ENCODE measurements at regions of chr17 and their contacts with region 1.

Region 1: DNA sequence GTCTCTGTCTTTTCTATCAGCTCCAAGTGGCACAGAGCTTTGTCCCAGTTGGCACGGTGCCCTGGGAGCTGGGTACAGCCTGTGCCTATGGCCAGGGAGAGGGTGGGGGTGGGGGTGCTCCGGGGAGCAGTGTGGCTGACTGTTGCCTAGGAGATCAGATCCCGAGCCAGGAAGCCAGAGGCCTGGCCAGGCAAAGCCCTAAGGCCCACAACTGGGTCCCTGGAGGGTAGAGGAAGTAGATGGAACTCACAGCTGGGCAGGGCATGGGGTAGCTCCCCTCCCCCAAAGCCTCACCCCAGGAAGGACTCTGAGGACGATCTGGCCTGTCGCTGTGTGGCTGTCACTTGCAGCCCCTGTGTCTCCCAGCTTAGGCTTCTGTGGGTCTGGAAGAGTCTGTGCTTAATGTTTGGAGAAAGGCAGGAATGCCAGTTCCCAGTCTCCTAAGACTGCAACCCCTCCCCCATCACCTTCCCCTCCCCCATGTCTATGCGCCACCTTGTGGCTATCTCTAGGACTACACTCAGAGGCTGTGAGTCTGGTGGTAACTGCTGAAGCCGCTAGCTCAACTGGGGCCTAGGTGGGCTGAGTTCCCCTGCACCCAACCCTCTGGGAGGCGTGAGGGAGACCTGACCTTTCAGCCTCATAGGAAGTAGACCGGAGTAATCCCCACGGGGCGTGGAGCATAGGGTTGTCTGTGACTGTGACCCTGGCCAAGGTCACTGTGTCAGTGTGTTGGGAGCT is 12.6 kb downstream of the THRA start:
- DNase-seq: peak; percentile 82
- ATAC-seq: peak; percentile 93
- H3K4me3 ChIP-seq: no peak overlapping the region
- H3K4me3 Mint-ChIP-seq: no peak overlapping the region
- H3K27ac ChIP-seq: no peak overlapping the region
- H3K27ac Mint-ChIP-seq: peak overlapping the region; percentile 46
- H3K4me1 ChIP-seq: peaks cover 28 to 31% of the 10 kb centered on the region in 2 donors
- H3K4me1 Mint-ChIP-seq: peaks cover 40% of the 10 kb centered on the region
- H3K27me3 ChIP-seq: no peaks in the 10 kb centered on the region
- H3K27me3 Mint-ChIP-seq: no peaks in the 10 kb centered on the region
- CTCF ChIP-seq: peak; percentile 88

Region 2: DNA sequence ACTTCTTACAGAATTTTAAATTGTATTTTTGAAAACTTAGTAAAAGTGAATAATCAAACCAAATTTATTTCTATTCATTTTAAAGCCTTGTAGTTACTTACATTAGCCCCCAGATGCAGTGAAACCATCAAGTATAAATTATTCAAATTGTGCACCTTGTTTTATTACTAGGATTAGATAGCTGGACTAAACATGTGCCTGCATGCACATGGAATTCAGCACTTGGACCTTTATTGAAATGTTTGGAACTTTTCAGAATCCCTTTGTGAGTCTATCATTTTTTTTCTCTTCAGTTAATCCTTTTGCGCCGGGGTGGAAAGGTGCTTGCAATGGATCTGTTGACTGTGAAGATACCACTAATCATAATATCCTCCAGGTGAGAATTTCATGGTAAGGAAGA is 202.6 kb before region 1 on chr17:
- CTCF ChIA-PET with region 1: interaction called, 10 read pairs
- POLR2A ChIA-PET with region 1: no interaction called
- intact Hi-C with region 1: no loop called
- DNase-seq: peak; percentile 56
- ATAC-seq: peak; percentile 31
- H3K4me3 ChIP-seq: peak overlapping the region in 2 of 5 experiments; percentile 2 to 6
- H3K4me3 Mint-ChIP-seq: peak overlapping the region; percentile 67
- H3K27ac ChIP-seq: peak overlapping the region in 1 of 2 donors; percentile 36
- H3K27ac Mint-ChIP-seq: peak overlapping the region; percentile 50
- H3K4me1 ChIP-seq: peaks cover 31 to 45% of the 10 kb centered on the region in 2 donors
- H3K4me1 Mint-ChIP-seq: peaks cover 44% of the 10 kb centered on the region
- H3K27me3 ChIP-seq: no peaks in the 10 kb centered on the region
- H3K27me3 Mint-ChIP-seq: no peaks in the 10 kb centered on the region
- CTCF ChIP-seq: peak; percentile 82

Region 3: DNA sequence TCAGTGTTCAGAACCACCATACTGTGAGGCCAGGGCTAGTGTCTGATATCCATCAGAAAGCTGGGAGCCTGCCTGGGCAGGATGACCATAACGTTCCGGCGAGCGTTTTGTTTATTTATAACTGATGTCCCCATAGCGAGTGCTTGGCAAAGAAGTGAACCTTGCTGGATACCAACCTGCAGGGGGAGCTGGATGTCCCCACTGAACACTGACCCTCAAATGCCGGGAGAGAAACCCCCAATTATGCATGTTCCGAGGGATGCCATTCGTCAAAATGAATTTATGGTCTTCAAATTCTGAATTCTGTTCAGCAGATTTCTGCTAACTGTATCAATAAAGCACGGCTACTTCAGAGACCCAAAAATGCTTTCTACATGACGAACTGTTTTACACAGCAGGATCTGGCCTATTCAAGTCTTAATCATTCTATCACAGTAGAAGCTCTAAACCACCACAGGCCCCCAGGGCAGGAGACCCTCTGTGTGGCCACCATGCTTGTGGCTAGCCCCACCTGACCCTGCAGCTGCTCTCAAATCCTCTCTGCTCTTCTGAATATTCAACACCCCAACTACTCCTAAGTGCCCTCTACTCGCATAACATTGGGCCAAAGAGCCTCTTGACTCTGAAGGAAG is 36.4 kb before region 1 on chr17:
- CTCF ChIA-PET with region 1: interaction called, 9 read pairs
- POLR2A ChIA-PET with region 1: interaction called, 13 read pairs
- intact Hi-C with region 1: no loop called
- DNase-seq: no peak
- ATAC-seq: no peak
- H3K4me3 ChIP-seq: no peak overlapping the region
- H3K4me3 Mint-ChIP-seq: no peak overlapping the region
- H3K27ac ChIP-seq: no peak overlapping the region
- H3K27ac Mint-ChIP-seq: no peak overlapping the region
- H3K4me1 ChIP-seq: no peaks in the 10 kb centered on the region
- H3K4me1 Mint-ChIP-seq: no peaks in the 10 kb centered on the region
- H3K27me3 ChIP-seq: no peaks in the 10 kb centered on the region
- H3K27me3 Mint-ChIP-seq: no peaks in the 10 kb centered on the region
- CTCF ChIP-seq: peak; percentile 28

Region 4: GRCh38 chr17:40086150-40087044 is 11.0 kb after region 1 on chr17:
- CTCF ChIA-PET with region 1: interaction called, 70 read pairs
- POLR2A ChIA-PET with region 1: interaction called, 3 read pairs
- intact Hi-C with region 1: no loop called
- DNase-seq: peak; percentile 72
- ATAC-seq: peak; percentile 78
- H3K4me3 ChIP-seq: no peak overlapping the region
- H3K4me3 Mint-ChIP-seq: no peak overlapping the region
- H3K27ac ChIP-seq: no peak overlapping the region
- H3K27ac Mint-ChIP-seq: no peak overlapping the region
- H3K4me1 ChIP-seq: no peaks in the 10 kb centered on the region
- H3K4me1 Mint-ChIP-seq: peaks cover 3% of the 10 kb centered on the region
- H3K27me3 ChIP-seq: no peaks in the 10 kb centered on the region
- H3K27me3 Mint-ChIP-seq: no peaks in the 10 kb centered on the region
- CTCF ChIP-seq: peak; percentile 85

Region 5: GRCh38 chr17:40121181-40122135 is 46.1 kb after region 1 on chr17 and contains the start of gene MSL1:
- CTCF ChIA-PET with region 1: interaction called, 12 read pairs
- POLR2A ChIA-PET with region 1: interaction called, 4 read pairs
- intact Hi-C with region 1: no loop called
- DNase-seq: peak; percentile 90
- ATAC-seq: peak; percentile 71
- H3K4me3 ChIP-seq: peak within 1 kb of the TSS; percentile 50 to 81 (median 77)
- H3K4me3 Mint-ChIP-seq: peak within 1 kb of the TSS; percentile 86
- H3K27ac ChIP-seq: peak within 1 kb of the TSS; percentile 55 to 79
- H3K27ac Mint-ChIP-seq: peak within 1 kb of the TSS; percentile 82
- H3K4me1 ChIP-seq: peaks cover 21 to 23% of the 10 kb centered on the region in 2 donors
- H3K4me1 Mint-ChIP-seq: peaks cover 32% of the 10 kb centered on the region
- H3K27me3 ChIP-seq: no peaks in the 10 kb centered on the region
- H3K27me3 Mint-ChIP-seq: no peaks in the 10 kb centered on the region
- CTCF ChIP-seq: no peak
- total RNA-seq, gene MSL1: 125 and 129 TPM in 2 replicates

Region 6: GRCh38 chr17:40168262-40168832 is 93.0 kb after region 1 on chr17:
- CTCF ChIA-PET with region 1: interaction called, 24 read pairs
- POLR2A ChIA-PET with region 1: no interaction called
- intact Hi-C with region 1: no loop called
- DNase-seq: peak; percentile 74
- ATAC-seq: peak; percentile 89
- H3K4me3 ChIP-seq: no peak overlapping the region
- H3K4me3 Mint-ChIP-seq: no peak overlapping the region
- H3K27ac ChIP-seq: no peak overlapping the region
- H3K27ac Mint-ChIP-seq: peak overlapping the region; percentile 53
- H3K4me1 ChIP-seq: no peaks in the 10 kb centered on the region
- H3K4me1 Mint-ChIP-seq: peaks cover 4% of the 10 kb centered on the region
- H3K27me3 ChIP-seq: no peaks in the 10 kb centered on the region
- H3K27me3 Mint-ChIP-seq: no peaks in the 10 kb centered on the region
- CTCF ChIP-seq: peak; percentile 77

Region 7: DNA sequence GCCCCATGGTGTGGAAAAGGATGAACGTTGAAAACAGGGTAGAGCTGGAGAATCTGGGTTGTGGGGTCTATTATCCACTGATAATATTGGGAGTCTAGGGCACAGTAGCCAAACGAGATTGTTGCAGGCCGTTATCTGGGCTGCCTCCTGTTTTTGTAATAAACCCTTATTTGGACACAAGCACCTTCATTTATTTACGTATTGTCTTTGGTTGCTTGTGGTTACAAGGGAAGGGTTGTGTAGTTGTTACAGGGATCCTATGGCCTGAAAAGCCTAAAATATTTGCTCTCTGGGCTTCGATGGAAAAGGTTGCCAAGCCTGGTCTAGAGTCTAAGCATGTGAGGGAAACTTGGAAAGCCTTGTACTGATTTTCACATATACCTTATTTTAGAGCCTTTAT is 576.6 kb after region 1 on chr17:
- CTCF ChIA-PET with region 1: no interaction called
- POLR2A ChIA-PET with region 1: no interaction called
- intact Hi-C with region 1: no loop called
- DNase-seq: no peak
- ATAC-seq: no peak
- H3K4me3 ChIP-seq: no peak overlapping the region
- H3K4me3 Mint-ChIP-seq: no peak overlapping the region
- H3K27ac ChIP-seq: no peak overlapping the region
- H3K27ac Mint-ChIP-seq: no peak overlapping the region
- H3K4me1 ChIP-seq: peaks cover 11 to 13% of the 10 kb centered on the region in 2 donors
- H3K4me1 Mint-ChIP-seq: peaks cover 15% of the 10 kb centered on the region
- H3K27me3 ChIP-seq: no peaks in the 10 kb centered on the region
- H3K27me3 Mint-ChIP-seq: no peaks in the 10 kb centered on the region
- CTCF ChIP-seq: no peak

Measured in B cell (primary cell).